GM12878 (cell line): ENCODE measurements at regions of chr6 and their contacts with region 1.

Region 1: GRCh38 chr6:129635396-129636130 is 74.4 kb downstream of the ARHGAP18 start:
- DNase-seq: no peak
- ATAC-seq: no peak
- H3K4me3 ChIP-seq: no peak overlapping the region
- H3K27ac ChIP-seq: no peak overlapping the region
- H3K4me1 ChIP-seq: peaks cover 16% of the 10 kb centered on the region; the same call in 1 of the 2 replicates
- H3K27me3 ChIP-seq: no peaks in the 10 kb centered on the region
- CTCF ChIP-seq: no peak
- EP300 ChIP-seq: no peak
- POLR2A ChIP-seq: no peak
- RAD21 ChIP-seq: no peak

Region 2: GRCh38 chr6:129661536-129662405 is 26.2 kb after region 1 on chr6:
- CTCF ChIA-PET with region 1: interaction called, 3 read pairs
- POLR2A ChIA-PET with region 1: interaction called, 3 read pairs
- RAD21 ChIA-PET with region 1: no interaction called
- SMC1A ChIA-PET with region 1: interaction called, 13 read pairs
- in situ Hi-C with region 1: no loop called
- intact Hi-C with region 1: no loop called
- DNase-seq: no peak
- ATAC-seq: peak; percentile 40
- H3K4me3 ChIP-seq: peak overlapping the region; percentile 7; the same call in 1 of the 2 replicates
- H3K27ac ChIP-seq: peak overlapping the region; percentile 89
- H3K4me1 ChIP-seq: peaks cover 44% of the 10 kb centered on the region
- H3K27me3 ChIP-seq: no peaks in the 10 kb centered on the region
- CTCF ChIP-seq: no peak
- EP300 ChIP-seq: peak in 1 of 2 experiments; percentile 61; a peak in 1 of 4 replicates
- POLR2A ChIP-seq: no peak
- RAD21 ChIP-seq: no peak